Psoas muscle (tissue), 8 donors: ENCODE measurements at regions of chr5 and their contacts with region 1.

Region 1: GRCh38 chr5:141524604-141525597 is 36.0 kb downstream of the PCDHGC5 start:
- DNase-seq: peak; percentile 84 to 91
- ATAC-seq: peak; percentile 78 to 84 (median 82)
- H3K4me3 ChIP-seq: no peak overlapping the region
- H3K27ac ChIP-seq: peak overlapping the region; percentile 77
- H3K4me1 ChIP-seq: peaks cover 65% of the 10 kb centered on the region
- H3K27me3 ChIP-seq: no peaks in the 10 kb centered on the region
- CTCF ChIP-seq: peak; percentile 99

Region 2: GRCh38 chr5:141420855-141421496 is 103.9 kb before region 1 on chr5 and contains the start of gene PCDHGA11:
- intact Hi-C with region 1: loop called in 1 of 2 experiments (anchors 5 kb)
- DNase-seq: peak in 1 of 2 donors; percentile 29
- ATAC-seq: peak; percentile 49 to 73 (median 66)
- H3K4me3 ChIP-seq: peak within 1 kb of the TSS; percentile 66
- H3K27ac ChIP-seq: peak within 1 kb of the TSS; percentile 7
- H3K4me1 ChIP-seq: no peaks in the 10 kb centered on the region
- H3K27me3 ChIP-seq: peaks cover 0 to 29% (median 6%) of the 10 kb centered on the region in 3 donors
- CTCF ChIP-seq: peak; percentile 68
- total RNA-seq, gene PCDHGA11: 0.94 to 4.4 (median 2.9) TPM